ENCODE measurements at regions of chr7 and their contacts with region 1.

Region 1: DNA sequence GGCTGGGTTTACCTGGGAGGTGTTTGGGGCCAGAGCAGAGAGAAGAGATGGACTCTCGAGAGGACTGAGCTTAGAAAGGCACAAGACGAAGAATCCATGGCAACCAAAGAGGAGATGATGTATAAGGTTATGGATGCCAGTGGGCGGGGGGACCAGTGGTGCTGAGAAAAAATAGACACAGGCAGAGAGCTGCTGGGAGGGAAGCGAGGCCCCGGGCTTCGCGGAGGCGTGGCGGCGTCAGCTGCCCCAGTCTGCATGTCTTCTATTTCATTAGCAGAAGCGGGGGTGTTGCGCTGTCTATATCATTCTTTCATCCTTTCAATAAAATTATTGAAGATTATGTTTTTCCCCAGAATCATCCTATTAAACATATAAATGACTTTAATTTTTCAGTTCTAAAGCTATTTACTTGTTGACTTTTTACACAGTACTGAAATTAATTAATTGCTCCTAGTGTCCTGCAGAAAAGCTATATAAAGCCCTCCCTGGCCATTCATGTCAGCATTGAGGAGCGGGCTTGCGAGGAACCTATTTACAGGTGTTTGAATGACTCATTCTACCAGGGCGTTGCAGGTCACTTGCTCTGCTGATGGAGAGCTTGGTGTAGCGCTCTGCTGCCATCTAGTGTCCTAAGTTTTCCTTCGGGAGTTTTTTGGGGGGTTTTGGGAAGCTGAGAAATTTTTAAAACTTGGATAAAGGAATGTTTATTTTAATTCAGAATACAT is 42.9 kb upstream of the BHLHA15 start:
- DNase-seq: peak; percentile 39 to 78
- H3K4me3 ChIP-seq: no peak overlapping the region
- H3K27ac ChIP-seq: no peak overlapping the region
- H3K4me1 ChIP-seq: no peaks in the 10 kb centered on the region; a peak in 1 of 7 replicates
- H3K27me3 ChIP-seq: no peaks in the 10 kb centered on the region
- CTCF ChIP-seq: peak; percentile 45 to 83 (median 68)
- EP300 ChIP-seq: no peak
- POLR2A ChIP-seq: no peak
- RAD21 ChIP-seq: peak; percentile 92 to 94

Region 2: GRCh38 chr7:98021588-98022351 is 146.6 kb before region 1 on chr7:
- CTCF ChIA-PET with region 1: interaction called, 476 read pairs
- POLR2A ChIA-PET with region 1: interaction called, 12 read pairs
- DNase-seq: peak; percentile 31 to 98
- H3K4me3 ChIP-seq: no peak overlapping the region
- H3K27ac ChIP-seq: no peak overlapping the region
- H3K4me1 ChIP-seq: no peaks in the 10 kb centered on the region; a peak in 2 of 7 replicates
- H3K27me3 ChIP-seq: no peaks in the 10 kb centered on the region
- CTCF ChIP-seq: peak; percentile 92 to 97 (median 96)
- EP300 ChIP-seq: no peak
- POLR2A ChIP-seq: no peak
- RAD21 ChIP-seq: peak; percentile 94 to 98

Region 3: DNA sequence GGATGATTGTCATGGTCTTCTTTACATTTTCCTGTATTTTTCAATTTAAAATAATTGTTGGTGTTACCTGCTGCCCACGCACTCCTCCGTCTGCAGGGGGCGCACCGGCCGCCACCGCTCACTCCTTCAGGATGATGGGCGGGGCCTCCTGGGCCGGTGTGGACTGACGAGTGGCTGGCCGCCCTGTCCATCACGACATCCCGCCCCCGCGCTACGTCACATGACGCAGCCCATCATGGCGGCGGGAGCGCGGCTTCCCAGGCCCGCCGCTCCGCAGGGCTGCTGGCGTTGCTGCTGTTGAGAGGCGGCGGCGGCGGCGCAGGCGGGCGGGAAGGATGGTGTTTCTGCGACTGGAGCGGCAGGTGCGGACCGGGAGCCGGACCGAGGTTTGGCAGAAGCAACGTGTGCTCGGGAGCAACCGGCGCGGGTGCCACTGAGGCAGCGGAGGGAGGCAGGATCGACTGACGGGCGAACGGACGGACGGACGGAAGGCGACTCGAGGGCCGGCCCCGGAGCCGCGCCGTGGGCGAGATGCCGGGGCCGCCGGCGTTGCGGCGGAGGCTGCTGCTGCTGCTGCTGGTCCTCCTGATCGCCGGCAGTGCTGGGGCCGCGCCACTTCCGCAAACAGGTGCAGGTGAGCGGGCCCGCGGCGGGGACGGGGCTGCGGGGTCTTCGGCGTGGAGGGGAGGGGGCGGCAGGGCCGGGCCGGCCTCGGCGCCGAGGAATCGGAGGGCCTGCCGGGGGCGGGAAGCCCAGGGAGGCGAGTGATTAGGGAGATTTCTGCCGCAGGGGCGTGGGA is 61.5 kb before region 1 on chr7 and contains the start of gene LMTK2:
- CTCF ChIA-PET with region 1: interaction called, 95 read pairs
- POLR2A ChIA-PET with region 1: no interaction called
- DNase-seq: peak; percentile 76 to 100
- H3K4me3 ChIP-seq: peak within 1 kb of the TSS; percentile 86 to 88 (median 86)
- H3K27ac ChIP-seq: peak within 1 kb of the TSS; percentile 75; the same call in 1 of the 2 replicates
- H3K4me1 ChIP-seq: peaks cover 2 to 11% (median 6%) of the 10 kb centered on the region in 4 experiments; a peak in 5 of 7 replicates
- H3K27me3 ChIP-seq: no peaks in the 10 kb centered on the region
- CTCF ChIP-seq: peak; percentile 71 to 89 (median 85)
- EP300 ChIP-seq: peak in 1 of 2 experiments; percentile 18; a peak in 1 of 3 replicates
- POLR2A ChIP-seq: peak; percentile 80 to 81
- RAD21 ChIP-seq: peak; percentile 58 to 61
- total RNA-seq, gene LMTK2: 26.8 and 30.7 TPM in 2 replicates

Region 4: DNA sequence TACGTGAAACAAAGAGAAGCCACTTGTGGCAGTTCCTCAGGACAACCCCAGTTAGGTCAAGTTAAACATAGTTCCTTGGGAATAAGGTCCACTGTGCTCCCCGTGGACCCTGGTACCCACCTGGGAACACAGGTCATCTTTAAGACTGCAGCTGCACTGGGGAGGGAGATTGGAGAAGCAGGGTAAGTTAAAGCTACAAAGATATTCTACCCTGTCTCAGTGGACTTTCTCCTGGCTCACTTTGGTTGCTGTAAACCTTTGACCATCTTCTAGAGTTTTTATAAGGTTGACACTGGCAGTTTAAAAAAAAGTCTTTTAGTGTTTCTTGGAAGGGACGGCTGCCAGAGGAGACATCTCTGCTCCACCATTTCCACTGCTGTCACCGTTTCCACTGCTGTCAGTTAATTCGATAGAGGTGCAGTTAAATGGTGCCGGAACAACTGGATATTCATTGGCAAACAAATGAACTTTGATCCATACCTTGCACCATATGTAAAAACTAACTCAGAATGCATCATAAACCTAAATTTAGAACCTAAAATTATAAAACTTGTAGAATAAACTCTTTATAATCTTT is 19.1 kb before region 1 on chr7:
- CTCF ChIA-PET with region 1: interaction called, 27 read pairs
- POLR2A ChIA-PET with region 1: no interaction called
- DNase-seq: no peak
- H3K4me3 ChIP-seq: no peak overlapping the region
- H3K27ac ChIP-seq: no peak overlapping the region
- H3K4me1 ChIP-seq: no peaks in the 10 kb centered on the region; a peak in 2 of 7 replicates
- H3K27me3 ChIP-seq: no peaks in the 10 kb centered on the region
- CTCF ChIP-seq: no peak
- EP300 ChIP-seq: no peak
- POLR2A ChIP-seq: no peak
- RAD21 ChIP-seq: no peak

Region 5: DNA sequence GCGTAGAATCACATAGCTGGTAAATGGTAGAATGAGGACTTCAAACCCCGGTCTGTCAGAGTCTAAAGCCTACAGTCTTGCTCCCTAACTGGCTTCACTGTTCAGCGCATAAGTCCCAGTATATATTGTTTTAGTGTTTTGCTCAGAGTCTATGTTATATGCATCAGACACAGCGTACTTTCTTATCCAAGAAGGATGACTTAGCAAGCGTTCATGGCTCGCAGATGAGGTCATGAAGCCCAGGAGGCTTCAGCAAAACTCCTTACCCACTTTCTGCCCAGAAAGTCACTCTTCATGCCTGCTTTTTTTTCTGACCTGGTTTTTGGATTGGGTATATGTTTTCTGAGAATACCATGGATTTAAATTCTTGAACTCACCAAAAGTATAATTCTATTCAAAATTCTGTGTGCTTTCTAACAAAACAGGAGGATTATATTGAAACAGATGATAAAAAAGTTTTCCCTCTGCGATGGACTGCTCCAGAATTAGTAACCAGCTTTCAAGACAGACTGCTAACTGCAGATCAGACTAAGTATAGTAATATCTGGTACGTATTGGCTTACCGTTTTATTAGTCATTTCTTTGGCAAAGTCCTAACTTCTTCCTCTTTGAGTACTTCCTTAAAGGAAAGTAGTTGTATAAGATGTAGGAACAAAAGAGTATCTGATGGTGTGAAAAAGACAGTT is 18.3 kb after region 1 on chr7:
- CTCF ChIA-PET with region 1: interaction called, 75 read pairs
- POLR2A ChIA-PET with region 1: no interaction called
- DNase-seq: no peak
- H3K4me3 ChIP-seq: no peak overlapping the region
- H3K27ac ChIP-seq: no peak overlapping the region
- H3K4me1 ChIP-seq: peaks cover 0 to 2% (median 0%) of the 10 kb centered on the region in 4 experiments; a peak in 1 of 7 replicates
- H3K27me3 ChIP-seq: no peaks in the 10 kb centered on the region
- CTCF ChIP-seq: no peak
- EP300 ChIP-seq: no peak
- POLR2A ChIP-seq: no peak
- RAD21 ChIP-seq: no peak